ENCODE measurements at regions of chr20 and their contacts with region 1.

Region 1: GRCh38 chr20:45823949-45824835 is 2.9 kb downstream of the TNNC2 start:
- DNase-seq: peak; percentile 20 to 25
- H3K4me3 ChIP-seq: no peak overlapping the region
- H3K27ac ChIP-seq: no peak overlapping the region
- H3K4me1 ChIP-seq: peaks cover 16% of the 10 kb centered on the region
- H3K27me3 ChIP-seq: no peaks in the 10 kb centered on the region
- CTCF ChIP-seq: 0 out of 2 replicates have a peak, but pooled peaks have one; percentile 17

Region 2: GRCh38 chr20:45867819-45868176 is 43.6 kb after region 1 on chr20:
- CTCF ChIA-PET with region 1: interaction called, 3 read pairs
- POLR2A ChIA-PET with region 1: interaction called, 11 read pairs
- intact Hi-C with region 1: no loop called
- DNase-seq: peak in 1 of 2 experiments; percentile 93
- H3K4me3 ChIP-seq: no peak overlapping the region
- H3K27ac ChIP-seq: peak overlapping the region; percentile 41
- H3K4me1 ChIP-seq: peaks cover 28% of the 10 kb centered on the region
- H3K27me3 ChIP-seq: no peaks in the 10 kb centered on the region
- CTCF ChIP-seq: no peak

Region 3: DNA sequence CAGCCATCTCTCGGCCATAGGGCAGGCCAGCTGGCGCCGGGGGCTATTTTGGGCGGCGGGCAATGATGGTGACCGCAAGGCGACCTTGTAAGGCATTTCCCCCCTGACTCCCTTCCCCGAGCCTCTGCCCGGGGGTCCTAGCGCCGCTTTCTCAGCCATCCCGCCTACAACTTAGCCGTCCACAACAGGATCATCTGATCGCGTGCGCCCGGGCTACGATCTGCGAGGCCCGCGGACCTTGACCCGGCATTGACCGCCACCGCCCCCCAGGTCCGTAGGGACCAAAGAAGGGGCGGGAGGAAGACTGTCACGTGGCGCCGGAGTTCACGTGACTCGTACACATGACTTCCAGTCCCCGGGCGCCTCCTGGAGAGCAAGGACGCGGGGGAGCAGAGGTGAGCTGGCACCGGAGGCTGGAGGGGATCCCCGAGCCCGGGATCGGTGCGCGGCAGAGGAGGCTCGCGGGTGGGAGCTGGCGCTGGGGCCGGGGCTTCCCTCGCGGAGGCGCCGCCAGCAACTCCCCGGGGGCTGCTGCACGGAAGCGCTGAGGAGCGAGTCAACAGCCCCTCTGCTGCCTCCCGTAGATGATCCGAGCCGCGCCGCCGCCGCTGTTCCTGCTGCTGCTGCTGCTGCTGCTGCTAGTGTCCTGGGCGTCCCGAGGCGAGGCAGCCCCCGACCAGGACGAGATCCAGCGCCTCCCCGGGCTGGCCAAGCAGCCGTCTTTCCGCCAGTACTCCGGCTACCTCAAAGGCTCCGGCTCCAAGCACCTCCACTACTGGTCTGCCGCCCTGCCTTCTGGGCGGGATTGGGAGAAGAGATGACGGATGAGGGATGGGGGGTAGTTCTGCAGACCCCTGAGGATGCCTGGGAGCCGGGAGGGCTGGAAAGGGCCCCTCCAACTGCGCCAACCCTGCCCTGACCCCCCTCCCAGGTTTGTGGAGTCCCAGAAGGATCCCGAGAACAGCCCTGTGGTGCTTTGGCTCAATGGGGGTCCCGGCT is 67.1 kb after region 1 on chr20 and contains the starts of genes CTSA and NEURL2:
- CTCF ChIA-PET with region 1: no interaction called
- POLR2A ChIA-PET with region 1: interaction called, 11 read pairs
- intact Hi-C with region 1: loop called (anchors 5 kb)
- DNase-seq: peak; percentile 81 to 90
- H3K4me3 ChIP-seq: peak within 1 kb of the TSS; percentile 82
- H3K27ac ChIP-seq: no peak within 1 kb of the TSS
- H3K4me1 ChIP-seq: peaks cover 14% of the 10 kb centered on the region; the same call in 1 of the 2 replicates
- H3K27me3 ChIP-seq: no peaks in the 10 kb centered on the region
- CTCF ChIP-seq: no peak; the same call in 1 of the 2 replicates
- total RNA-seq, gene CTSA: 123 and 132 TPM in 2 replicates
- total RNA-seq, gene NEURL2: 6.5 and 9.2 TPM in 2 replicates